ENCODE measurements at regions of chr5 and their contacts with region 1.

Region 1: GRCh38 chr5:36264202-36264760 is 22.6 kb upstream of the NADK2 start:
- DNase-seq: no peak
- H3K4me3 ChIP-seq: no peak overlapping the region
- H3K27ac ChIP-seq: no peak overlapping the region
- H3K4me1 ChIP-seq: no peaks in the 10 kb centered on the region
- H3K27me3 ChIP-seq: no peaks in the 10 kb centered on the region

Region 2: GRCh38 chr5:35799753-35800152 is 464.5 kb before region 1 on chr5:
- CTCF ChIA-PET with region 1: no interaction called
- POLR2A ChIA-PET with region 1: no interaction called
- DNase-seq: no peak
- H3K4me3 ChIP-seq: no peak overlapping the region
- H3K27ac ChIP-seq: no peak overlapping the region
- H3K4me1 ChIP-seq: peaks cover 2 to 14% (median 5%) of the 10 kb centered on the region in 4 experiments
- H3K27me3 ChIP-seq: no peaks in the 10 kb centered on the region

Region 3: GRCh38 chr5:36230151-36230793 is 34.0 kb before region 1 on chr5:
- CTCF ChIA-PET with region 1: no interaction called
- POLR2A ChIA-PET with region 1: no interaction called
- DNase-seq: no peak
- H3K4me3 ChIP-seq: no peak overlapping the region
- H3K27ac ChIP-seq: no peak overlapping the region
- H3K4me1 ChIP-seq: no peaks in the 10 kb centered on the region
- H3K27me3 ChIP-seq: no peaks in the 10 kb centered on the region

Region 4: GRCh38 chr5:36241631-36242533 is 22.4 kb before region 1 on chr5 and contains the start of gene NADK2:
- CTCF ChIA-PET with region 1: interaction called, 14 read pairs
- POLR2A ChIA-PET with region 1: no interaction called
- DNase-seq: peak; percentile 97 to 99 (median 99)
- H3K4me3 ChIP-seq: peak within 1 kb of the TSS; percentile 78 to 96 (median 85)
- H3K27ac ChIP-seq: peak within 1 kb of the TSS; percentile 74 to 87
- H3K4me1 ChIP-seq: peaks cover 6 to 40% (median 19%) of the 10 kb centered on the region in 4 experiments
- H3K27me3 ChIP-seq: no peaks in the 10 kb centered on the region

Region 5: GRCh38 chr5:36279054-36279698 is 14.9 kb after region 1 on chr5:
- CTCF ChIA-PET with region 1: interaction called, 17 read pairs
- POLR2A ChIA-PET with region 1: no interaction called
- DNase-seq: no peak
- H3K4me3 ChIP-seq: no peak overlapping the region
- H3K27ac ChIP-seq: no peak overlapping the region
- H3K4me1 ChIP-seq: peaks cover 0 to 2% (median 0%) of the 10 kb centered on the region in 4 experiments
- H3K27me3 ChIP-seq: no peaks in the 10 kb centered on the region

Region 6: GRCh38 chr5:36389245-36389644 is 125.0 kb after region 1 on chr5:
- CTCF ChIA-PET with region 1: interaction called, 17 read pairs
- POLR2A ChIA-PET with region 1: no interaction called
- DNase-seq: peak; percentile 61 to 84 (median 79)
- H3K4me3 ChIP-seq: no peak overlapping the region
- H3K27ac ChIP-seq: no peak overlapping the region
- H3K4me1 ChIP-seq: peaks cover 4 to 34% (median 23%) of the 10 kb centered on the region in 4 experiments
- H3K27me3 ChIP-seq: no peaks in the 10 kb centered on the region

Region 7: GRCh38 chr5:36695677-36696673 is 431.7 kb after region 1 on chr5:
- CTCF ChIA-PET with region 1: interaction called, 17 read pairs
- POLR2A ChIA-PET with region 1: no interaction called
- DNase-seq: peak; percentile 75 to 85 (median 79)
- H3K4me3 ChIP-seq: no peak overlapping the region
- H3K27ac ChIP-seq: no peak overlapping the region
- H3K4me1 ChIP-seq: peaks cover 0 to 18% (median 14%) of the 10 kb centered on the region in 4 experiments
- H3K27me3 ChIP-seq: no peaks in the 10 kb centered on the region

Measured in common myeloid progenitor, CD34-positive (primary cell).